ENCODE measurements at regions of chr22 and their contacts with region 1.

Region 1: DNA sequence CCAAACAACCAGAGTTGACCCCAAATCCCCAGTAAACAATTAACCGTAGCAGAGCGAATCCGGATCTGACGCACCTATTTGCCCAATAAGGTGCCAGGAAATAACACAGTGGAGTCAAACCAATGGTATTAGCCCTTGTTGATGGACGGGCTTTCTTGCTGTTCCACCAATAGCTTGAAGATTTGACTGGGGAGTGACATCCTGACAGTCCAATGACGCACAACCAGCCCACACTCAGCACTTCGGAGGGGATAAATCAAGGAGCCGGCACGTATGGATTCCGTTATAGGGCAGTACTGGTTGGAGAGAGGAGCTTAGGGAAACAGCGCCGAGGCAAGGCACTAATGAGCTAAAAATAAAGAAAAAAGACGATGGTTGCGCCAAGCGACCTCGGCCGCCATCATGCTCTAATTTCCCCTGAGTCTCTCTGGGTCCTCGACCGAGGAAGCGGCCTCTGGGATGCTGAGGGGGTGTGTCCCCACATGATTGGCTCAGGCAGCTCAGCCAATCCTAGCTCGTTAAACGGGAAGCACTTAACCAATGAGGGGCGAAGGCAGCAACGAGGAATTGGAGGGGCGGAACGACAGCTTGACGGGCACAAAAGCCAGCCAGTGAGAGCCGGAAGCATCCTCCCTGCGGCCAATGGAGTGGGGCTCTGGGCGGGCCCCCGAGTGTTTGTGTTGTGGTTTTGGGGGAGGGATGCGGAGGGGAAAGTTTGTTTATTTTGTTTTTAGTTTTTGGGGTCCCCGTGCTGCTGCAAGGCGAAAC is 49.5 kb downstream of the FAM83F start:
- DNase-seq: peak; percentile 99
- ATAC-seq: peak; percentile 88
- H3K4me3 Mint-ChIP-seq: peak overlapping the region; percentile 87
- H3K27ac Mint-ChIP-seq: peak overlapping the region; percentile 99
- H3K4me1 Mint-ChIP-seq: peaks cover 26% of the 10 kb centered on the region
- H3K27me3 Mint-ChIP-seq: no peaks in the 10 kb centered on the region
- CTCF ChIP-seq: no peak

Region 2: DNA sequence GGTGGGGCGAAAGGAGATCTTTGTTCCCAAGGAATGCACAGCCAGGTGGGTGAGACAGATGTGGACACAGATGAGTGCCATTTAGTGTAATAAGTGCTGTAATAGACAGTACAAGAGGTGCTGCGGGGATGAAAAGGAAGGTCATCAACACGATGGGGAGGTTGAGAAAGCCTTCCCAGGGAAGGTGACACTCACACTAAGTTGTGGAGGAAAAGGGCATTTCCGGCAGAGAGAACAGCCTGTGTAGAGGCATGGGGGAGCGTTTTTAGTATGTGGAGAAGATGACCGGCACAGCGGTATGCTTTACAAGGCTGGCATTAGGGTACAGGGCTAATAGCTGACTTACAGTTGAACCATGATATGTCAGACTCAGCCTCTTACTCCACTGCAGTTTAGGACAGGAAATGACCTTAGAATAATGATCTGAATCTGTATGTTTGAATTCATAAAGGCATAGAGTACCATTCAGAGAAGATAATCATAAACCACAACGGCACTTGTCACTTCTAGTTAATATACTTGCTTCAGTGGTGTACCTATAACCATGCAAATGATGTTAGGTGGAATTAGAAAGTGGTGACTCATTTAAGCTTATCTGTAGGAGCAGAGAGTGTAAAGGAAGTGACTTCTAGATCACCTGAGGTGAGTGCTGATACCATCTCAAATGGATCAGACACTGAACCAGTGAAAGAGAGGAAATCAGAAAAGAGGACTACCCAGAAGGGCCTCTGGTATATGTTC is 11.0 kb after region 1 on chr22:
- CTCF ChIA-PET with region 1: interaction called, 6 read pairs
- POLR2A ChIA-PET with region 1: interaction called, 63 read pairs
- intact Hi-C with region 1: no loop called
- DNase-seq: peak; percentile 50
- ATAC-seq: peak; percentile 86
- H3K4me3 Mint-ChIP-seq: peak overlapping the region; percentile 74
- H3K27ac Mint-ChIP-seq: peak overlapping the region; percentile 95
- H3K4me1 Mint-ChIP-seq: peaks cover 78% of the 10 kb centered on the region
- H3K27me3 Mint-ChIP-seq: no peaks in the 10 kb centered on the region
- CTCF ChIP-seq: no peak

Region 3: DNA sequence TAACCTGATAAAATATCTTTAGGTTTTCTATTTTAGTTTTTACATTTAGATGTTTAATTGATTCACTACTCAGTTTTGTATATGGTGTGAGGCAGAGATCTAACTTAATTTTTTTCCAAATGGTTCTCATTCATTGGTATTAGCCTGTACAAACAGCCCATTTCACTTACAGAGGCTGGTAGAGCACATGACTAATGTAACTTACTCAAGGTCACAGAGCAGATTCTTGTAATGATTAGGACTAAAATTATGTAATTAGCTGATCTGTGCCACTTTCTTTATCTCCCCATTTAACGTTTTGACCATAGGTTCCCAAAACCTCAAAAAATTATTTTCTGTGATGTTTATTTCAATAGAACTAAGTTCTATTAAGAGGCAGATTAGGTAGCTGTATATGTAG is 116.9 kb after region 1 on chr22:
- CTCF ChIA-PET with region 1: no interaction called
- POLR2A ChIA-PET with region 1: no interaction called
- intact Hi-C with region 1: no loop called
- DNase-seq: no peak
- ATAC-seq: no peak
- H3K4me3 Mint-ChIP-seq: no peak overlapping the region
- H3K27ac Mint-ChIP-seq: no peak overlapping the region
- H3K4me1 Mint-ChIP-seq: peaks cover 7% of the 10 kb centered on the region
- H3K27me3 Mint-ChIP-seq: no peaks in the 10 kb centered on the region
- CTCF ChIP-seq: no peak

Measured in activated CD8-positive, alpha-beta T cell treated with anti-CD3 and anti-CD28 coated beads for 36 hours (primary cell).